GM13977 (cell line): ENCODE measurements at regions of chr10 and their contacts with region 1.

Region 1: GRCh38 chr10:104349623-104350126 is 4.0 kb upstream of the CFAP58 start:
- DNase-seq: peak; percentile 41
- CTCF ChIP-seq: no peak

Region 2: DNA sequence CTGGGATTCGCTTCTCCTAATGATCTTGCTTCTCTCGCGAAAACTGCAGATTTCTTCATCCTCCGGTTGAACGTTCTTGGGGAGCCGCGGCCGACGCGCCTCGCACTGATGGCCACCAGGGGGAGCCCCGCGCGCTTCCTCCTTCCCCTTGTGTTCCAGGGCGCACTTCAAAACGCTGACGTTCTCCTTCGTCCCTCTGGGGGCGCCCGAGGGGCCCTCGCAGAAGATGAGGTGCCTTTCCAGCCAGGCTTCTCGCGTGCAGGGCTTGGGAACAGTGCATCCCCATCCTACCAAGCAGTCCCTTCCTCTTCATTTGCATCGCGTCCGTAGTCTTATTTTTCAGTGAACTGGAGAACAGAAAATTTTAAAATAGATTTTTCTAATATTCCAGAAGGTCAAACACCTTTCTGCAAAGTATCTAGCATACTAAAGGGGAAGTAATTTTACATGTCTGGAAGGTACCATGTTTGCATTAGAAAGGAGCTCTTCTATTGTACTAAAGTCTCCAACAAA is 58.2 kb before region 1 on chr10:
- in situ Hi-C with region 1: loop called (anchors 10 kb)
- DNase-seq: peak; percentile 88
- CTCF ChIP-seq: peak; percentile 99

Region 3: GRCh38 chr10:104309976-104310674 is 39.5 kb before region 1 on chr10:
- in situ Hi-C with region 1: loop called (anchors 5 kb)
- DNase-seq: no peak
- CTCF ChIP-seq: no peak

Region 4: DNA sequence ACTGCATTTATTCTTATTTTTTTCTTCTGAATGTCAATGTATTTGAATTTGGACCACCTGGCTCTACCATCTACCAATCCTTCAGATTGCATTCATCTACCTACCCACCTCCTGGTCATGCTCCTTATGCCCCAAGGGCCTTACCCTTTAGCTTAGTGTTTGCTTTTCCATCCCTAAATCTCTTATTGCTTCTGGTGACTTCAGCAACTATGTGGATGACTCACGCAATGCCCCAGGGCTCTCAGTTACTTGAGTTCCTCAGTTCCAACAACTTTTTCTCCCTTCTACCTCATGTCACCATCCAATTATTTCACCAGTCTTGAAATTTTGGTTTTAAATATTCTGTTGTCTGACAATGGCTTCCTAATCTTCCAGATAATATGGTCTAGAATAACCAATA is 122.8 kb after region 1 on chr10:
- in situ Hi-C with region 1: no loop called
- DNase-seq: no peak
- CTCF ChIP-seq: no peak